Left cardiac atrium (tissue), 4 donors: ENCODE measurements at regions of chr17 and their contacts with region 1.

Region 1: GRCh38 chr17:64975329-64976087 is 56.2 kb upstream of the LRRC37A3 start:
- DNase-seq: peak; percentile 95
- ATAC-seq: peak; percentile 97

Region 2: GRCh38 chr17:64747938-64748540 is 227.5 kb before region 1 on chr17:
- intact Hi-C with region 1: no loop called
- DNase-seq: no peak
- ATAC-seq: peak; percentile 65 to 86

Region 3: GRCh38 chr17:65055348-65056261 is 80.1 kb after region 1 on chr17:
- intact Hi-C with region 1: loop called (anchors 5 to 10 kb)
- DNase-seq: peak; percentile 69
- ATAC-seq: peak; percentile 48 to 55